Activated naive CD4-positive, alpha-beta T cell treated with anti-CD3 and anti-CD28 coated beads for 36 hours (primary cell): ENCODE measurements at regions of chr19 and their contacts with region 1.

Region 1: GRCh38 chr19:57410877-57411671 is at the start of gene ZNF17:
- DNase-seq: peak; percentile 96
- H3K4me3 Mint-ChIP-seq: peak within 1 kb of the TSS; percentile 92
- H3K27ac Mint-ChIP-seq: peak within 1 kb of the TSS; percentile 56
- H3K4me1 Mint-ChIP-seq: peaks cover 19% of the 10 kb centered on the region
- H3K27me3 Mint-ChIP-seq: no peaks in the 10 kb centered on the region
- total RNA-seq, gene ZNF17: 4.6 to 6.3 TPM

Region 2: DNA sequence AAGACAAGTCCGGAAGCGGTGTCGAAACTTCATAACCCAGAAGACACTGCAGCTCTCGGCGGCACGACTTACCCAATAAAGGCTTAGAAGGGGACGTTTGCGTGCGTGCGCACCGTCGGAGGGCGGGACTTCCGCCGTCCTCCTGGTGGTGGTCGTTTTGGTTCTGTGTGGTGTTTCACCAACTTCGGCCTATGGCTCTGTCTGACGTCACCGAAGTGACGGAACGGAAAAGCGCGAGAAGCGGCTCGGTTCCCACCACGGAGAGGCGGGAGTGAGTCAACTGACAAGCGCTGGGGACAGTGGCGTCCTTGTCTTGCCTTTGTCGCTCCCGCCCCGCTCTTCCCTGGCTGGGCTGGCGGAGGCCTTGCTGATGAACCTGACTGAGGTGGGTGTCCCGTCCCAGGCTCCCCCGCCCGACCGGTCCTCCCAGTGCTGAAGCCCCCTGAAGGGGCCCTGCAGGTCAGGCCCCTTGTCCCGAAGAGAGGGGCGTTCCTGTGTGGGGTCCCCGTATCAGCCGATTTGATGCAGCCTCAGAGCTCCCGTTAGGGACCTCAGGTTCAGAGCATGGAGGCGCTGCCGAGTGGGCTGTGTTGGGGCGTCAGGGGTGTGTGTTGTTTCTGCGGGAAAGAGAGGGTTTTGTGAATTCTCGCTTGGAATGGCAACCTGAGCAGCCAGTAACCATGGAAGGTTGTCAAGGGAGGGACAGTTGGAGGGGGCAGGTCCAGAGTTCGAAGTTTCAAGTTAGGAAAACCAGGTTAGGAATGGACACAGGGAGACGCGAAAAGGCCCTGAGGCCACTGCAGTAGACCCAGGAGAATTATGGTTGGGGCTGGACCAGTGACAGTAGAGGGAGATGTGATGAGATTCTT is 21.1 kb before region 1 on chr19 and contains the start of gene ZNF548:
- CTCF ChIA-PET with region 1: interaction called, 7 read pairs
- intact Hi-C with region 1: loop called (anchors 1 kb)
- DNase-seq: peak; percentile 94
- H3K4me3 Mint-ChIP-seq: peak within 1 kb of the TSS; percentile 88
- H3K27ac Mint-ChIP-seq: peak within 1 kb of the TSS; percentile 87
- H3K4me1 Mint-ChIP-seq: peaks cover 20% of the 10 kb centered on the region
- H3K27me3 Mint-ChIP-seq: no peaks in the 10 kb centered on the region
- total RNA-seq, gene ZNF548: 11.9 to 13.3 TPM

Region 3: GRCh38 chr19:57477191-57478008 is 66.3 kb after region 1 on chr19 and contains the start of gene ZNF772:
- CTCF ChIA-PET with region 1: interaction called, 3 read pairs
- intact Hi-C with region 1: loop called (anchors 5 kb)
- DNase-seq: peak; percentile 93
- H3K4me3 Mint-ChIP-seq: peak within 1 kb of the TSS; percentile 83
- H3K27ac Mint-ChIP-seq: peak within 1 kb of the TSS; percentile 82
- H3K4me1 Mint-ChIP-seq: peaks cover 21% of the 10 kb centered on the region
- H3K27me3 Mint-ChIP-seq: no peaks in the 10 kb centered on the region
- total RNA-seq, gene ZNF772: 6.0 to 8.3 TPM

Region 4: GRCh38 chr19:57527136-57527881 is 116.2 kb after region 1 on chr19 and contains the start of gene ZNF549:
- CTCF ChIA-PET with region 1: no interaction called
- intact Hi-C with region 1: no loop called
- DNase-seq: peak; percentile 91
- H3K4me3 Mint-ChIP-seq: peak within 1 kb of the TSS; percentile 80
- H3K27ac Mint-ChIP-seq: peak within 1 kb of the TSS; percentile 70
- H3K4me1 Mint-ChIP-seq: peaks cover 14% of the 10 kb centered on the region
- H3K27me3 Mint-ChIP-seq: no peaks in the 10 kb centered on the region
- total RNA-seq, gene ZNF549: 1.8 TPM

Region 5: GRCh38 chr19:57632987-57633831 is 222.1 kb after region 1 on chr19 and contains the start of gene ZNF211:
- CTCF ChIA-PET with region 1: no interaction called
- intact Hi-C with region 1: loop called (anchors 1 kb)
- DNase-seq: peak; percentile 91
- H3K4me3 Mint-ChIP-seq: peak within 1 kb of the TSS; percentile 87
- H3K27ac Mint-ChIP-seq: peak within 1 kb of the TSS; percentile 72
- H3K4me1 Mint-ChIP-seq: peaks cover 18% of the 10 kb centered on the region
- H3K27me3 Mint-ChIP-seq: no peaks in the 10 kb centered on the region
- total RNA-seq, gene ZNF211: 5.2 to 5.7 TPM

Region 6: DNA sequence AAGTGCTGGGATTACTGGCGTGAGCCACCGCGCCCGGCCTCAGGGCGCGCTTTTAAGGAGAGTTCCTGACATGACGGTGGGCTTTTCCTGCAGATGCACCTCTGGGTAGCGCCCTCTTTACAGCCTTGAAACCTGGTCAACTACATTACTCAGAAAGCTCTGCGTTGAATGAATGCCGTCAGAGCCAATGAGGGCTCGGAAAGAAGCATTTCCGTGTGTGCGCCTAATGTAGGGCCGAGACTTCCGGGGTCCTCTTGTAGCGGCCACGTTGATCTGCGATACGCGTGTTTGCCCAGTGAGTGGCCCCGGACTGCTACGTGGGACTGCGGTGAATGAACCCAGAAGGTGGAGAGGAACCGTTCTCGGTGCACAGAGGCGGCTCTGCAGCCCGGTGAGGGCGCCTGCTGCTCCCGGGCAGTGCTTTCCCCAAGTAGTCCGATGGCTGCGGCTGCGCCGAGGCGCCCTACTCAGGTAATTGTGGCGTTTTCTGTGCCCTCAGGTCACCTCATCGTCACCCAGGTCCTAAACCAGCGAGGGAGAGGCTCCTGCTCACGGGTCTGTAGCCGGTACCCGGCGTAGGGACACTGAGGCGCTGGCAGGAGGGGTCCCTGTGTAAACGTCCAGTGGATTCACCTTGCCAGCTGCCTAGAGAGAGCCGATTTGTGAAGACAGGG is 408.5 kb after region 1 on chr19:
- CTCF ChIA-PET with region 1: no interaction called
- intact Hi-C with region 1: loop called (anchors 1 kb)
- DNase-seq: peak; percentile 89
- H3K4me3 Mint-ChIP-seq: peak overlapping the region; percentile 99
- H3K27ac Mint-ChIP-seq: peak overlapping the region; percentile 96
- H3K4me1 Mint-ChIP-seq: peaks cover 50% of the 10 kb centered on the region
- H3K27me3 Mint-ChIP-seq: no peaks in the 10 kb centered on the region